ENCODE measurements at regions of chr20 and their contacts with region 1.

Region 1: DNA sequence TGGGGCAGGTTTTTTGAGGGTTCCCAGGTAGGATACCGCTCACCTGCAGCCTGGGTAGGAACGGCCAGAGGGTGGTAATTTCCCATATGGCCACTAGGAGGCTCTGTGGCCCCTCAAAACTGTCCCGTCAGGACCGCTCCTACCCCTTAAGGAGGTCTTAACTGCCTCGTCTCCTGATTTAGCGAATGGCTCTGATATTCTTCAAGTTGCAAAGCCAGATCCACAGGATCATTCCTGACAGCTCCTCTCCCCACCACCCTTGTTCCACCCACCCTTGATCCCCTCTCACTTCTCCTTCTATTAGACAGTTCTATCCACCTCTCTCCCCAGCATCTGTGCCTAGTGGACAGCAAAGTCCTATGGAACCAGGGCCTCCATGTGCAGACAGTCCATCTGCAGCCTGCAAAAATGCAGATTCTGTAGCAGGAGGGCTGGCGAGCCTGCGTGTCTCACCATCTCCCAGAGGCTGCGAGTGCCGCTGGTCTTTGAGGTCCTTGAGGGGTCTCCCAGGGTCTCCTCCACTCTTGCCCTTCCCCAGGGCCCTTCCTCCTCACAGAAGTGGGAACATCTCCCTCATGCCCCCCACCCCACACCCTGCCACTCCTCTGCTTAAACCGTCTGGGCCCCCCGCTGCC is 34.3 kb upstream of the ZBP1 start:
- DNase-seq: peak; percentile 71 to 87
- ATAC-seq: peak; percentile 69 to 82
- H3K4me3 ChIP-seq: no peak overlapping the region
- H3K27ac ChIP-seq: peak overlapping the region; percentile 24 to 57
- H3K4me1 ChIP-seq: peaks cover 37% of the 10 kb centered on the region
- CTCF ChIP-seq: peak; percentile 87
- EP300 ChIP-seq: no peak
- POLR2A ChIP-seq: no peak
- RAD21 ChIP-seq: peak; percentile 83 to 86

Region 2: GRCh38 chr20:57622579-57623377 is 31.7 kb before region 1 on chr20:
- CTCF ChIA-PET with region 1: interaction called, 22 read pairs
- POLR2A ChIA-PET with region 1: no interaction called
- DNase-seq: peak; percentile 88 to 91
- ATAC-seq: peak; percentile 90 to 98
- H3K4me3 ChIP-seq: no peak overlapping the region
- H3K27ac ChIP-seq: peak overlapping the region; percentile 67 to 82
- H3K4me1 ChIP-seq: peaks cover 25% of the 10 kb centered on the region
- CTCF ChIP-seq: peak; percentile 87
- EP300 ChIP-seq: no peak
- POLR2A ChIP-seq: no peak
- RAD21 ChIP-seq: peak; percentile 95 to 96

Region 3: GRCh38 chr20:57628047-57628961 is 26.2 kb before region 1 on chr20:
- CTCF ChIA-PET with region 1: interaction called, 22 read pairs
- POLR2A ChIA-PET with region 1: no interaction called
- DNase-seq: no peak
- ATAC-seq: no peak
- H3K4me3 ChIP-seq: no peak overlapping the region
- H3K27ac ChIP-seq: peak overlapping the region in 1 of 2 experiments; percentile 30; a peak in 1 of 6 replicates
- H3K4me1 ChIP-seq: peaks cover 3% of the 10 kb centered on the region; the same call in 1 of the 3 replicates
- CTCF ChIP-seq: no peak
- EP300 ChIP-seq: no peak
- POLR2A ChIP-seq: no peak
- RAD21 ChIP-seq: no peak

Region 4: GRCh38 chr20:57638173-57638894 is 16.1 kb before region 1 on chr20:
- CTCF ChIA-PET with region 1: interaction called, 25 read pairs
- POLR2A ChIA-PET with region 1: no interaction called
- DNase-seq: peak in 1 of 2 experiments; percentile 82
- ATAC-seq: peak; percentile 93 to 99
- H3K4me3 ChIP-seq: peak overlapping the region; percentile 14; the same call in 2 of the 3 replicates
- H3K27ac ChIP-seq: peak overlapping the region; percentile 66 to 82
- H3K4me1 ChIP-seq: peaks cover 18% of the 10 kb centered on the region
- CTCF ChIP-seq: no peak
- EP300 ChIP-seq: no peak
- POLR2A ChIP-seq: no peak
- RAD21 ChIP-seq: 0 out of 5 replicates have a peak, but pooled peaks of 1 of the 2 experiments have one; percentile 11

Region 5: DNA sequence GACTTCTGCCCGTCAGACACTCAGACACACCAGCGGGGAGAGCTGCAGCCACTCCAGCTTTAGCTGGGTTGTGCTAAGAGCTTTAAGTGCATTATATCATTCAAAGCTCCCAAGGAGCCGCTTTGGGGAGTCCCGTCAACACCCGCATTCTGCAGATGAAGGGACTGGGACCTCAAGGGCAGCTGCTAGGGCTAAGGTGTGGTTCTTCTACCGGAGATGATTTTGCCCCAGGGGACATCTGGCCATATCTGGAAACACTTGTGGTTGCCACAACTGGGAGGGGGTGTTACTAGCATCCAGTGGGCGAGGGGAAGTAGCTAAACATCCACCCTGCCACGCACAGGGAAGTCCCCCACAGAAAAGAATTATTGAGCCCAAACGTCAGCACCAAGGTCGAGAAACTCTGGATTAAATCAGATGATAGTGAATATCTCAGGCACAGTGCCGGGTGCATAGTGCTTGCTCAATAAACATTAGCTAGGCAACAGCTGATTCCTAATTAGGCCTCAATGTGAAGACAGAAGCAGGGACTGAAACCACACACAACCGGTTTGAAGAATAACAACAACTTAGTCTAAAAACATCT is 25.7 kb after region 1 on chr20:
- CTCF ChIA-PET with region 1: interaction called, 13 read pairs
- POLR2A ChIA-PET with region 1: no interaction called
- DNase-seq: no peak
- ATAC-seq: no peak
- H3K4me3 ChIP-seq: no peak overlapping the region
- H3K27ac ChIP-seq: peak overlapping the region in 1 of 2 experiments; percentile 41; a peak in 2 of 6 replicates
- H3K4me1 ChIP-seq: peaks cover 98% of the 10 kb centered on the region
- CTCF ChIP-seq: no peak
- EP300 ChIP-seq: no peak
- POLR2A ChIP-seq: no peak
- RAD21 ChIP-seq: no peak

Region 6: DNA sequence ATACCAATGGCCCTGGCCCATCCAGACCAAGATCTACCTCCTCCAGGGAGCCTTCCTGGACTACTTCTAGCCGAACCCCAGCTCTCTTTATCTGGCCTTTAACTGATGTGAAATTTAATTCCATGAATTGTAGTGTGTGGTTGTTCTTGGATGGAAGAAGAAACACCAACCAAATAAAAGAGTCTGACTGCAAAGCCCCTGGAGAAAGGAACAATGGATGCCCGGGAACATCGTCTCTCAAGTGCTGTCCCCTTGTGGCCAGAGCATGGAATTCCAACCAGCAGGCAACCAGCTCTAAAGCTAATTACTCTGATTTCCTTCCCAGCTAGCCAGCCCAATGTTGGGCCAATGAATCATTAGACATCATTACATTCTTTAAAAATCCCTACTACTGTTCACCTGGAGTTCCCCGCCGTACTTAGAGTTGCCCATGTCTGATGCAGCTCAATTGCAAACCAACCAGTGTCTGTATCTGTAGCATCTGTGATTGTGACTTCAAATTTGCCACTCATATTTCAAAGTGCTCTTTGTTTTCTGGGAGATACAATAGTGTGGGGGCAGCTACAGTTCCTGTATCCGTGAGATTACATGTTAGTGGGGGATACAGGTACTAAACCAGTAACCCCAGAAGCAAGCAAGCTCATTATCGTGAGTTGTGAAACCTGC is 432.8 kb after region 1 on chr20:
- CTCF ChIA-PET with region 1: interaction called, 15 read pairs
- POLR2A ChIA-PET with region 1: no interaction called
- DNase-seq: peak; percentile 56 to 57
- ATAC-seq: peak in 1 of 2 experiments; percentile 76; a peak in 3 of 6 replicates
- H3K4me3 ChIP-seq: no peak overlapping the region
- H3K27ac ChIP-seq: peak overlapping the region; percentile 42 to 70
- H3K4me1 ChIP-seq: peaks cover 4% of the 10 kb centered on the region
- CTCF ChIP-seq: peak; percentile 76
- EP300 ChIP-seq: no peak
- POLR2A ChIP-seq: no peak
- RAD21 ChIP-seq: peak; percentile 83 to 89

Region 7: DNA sequence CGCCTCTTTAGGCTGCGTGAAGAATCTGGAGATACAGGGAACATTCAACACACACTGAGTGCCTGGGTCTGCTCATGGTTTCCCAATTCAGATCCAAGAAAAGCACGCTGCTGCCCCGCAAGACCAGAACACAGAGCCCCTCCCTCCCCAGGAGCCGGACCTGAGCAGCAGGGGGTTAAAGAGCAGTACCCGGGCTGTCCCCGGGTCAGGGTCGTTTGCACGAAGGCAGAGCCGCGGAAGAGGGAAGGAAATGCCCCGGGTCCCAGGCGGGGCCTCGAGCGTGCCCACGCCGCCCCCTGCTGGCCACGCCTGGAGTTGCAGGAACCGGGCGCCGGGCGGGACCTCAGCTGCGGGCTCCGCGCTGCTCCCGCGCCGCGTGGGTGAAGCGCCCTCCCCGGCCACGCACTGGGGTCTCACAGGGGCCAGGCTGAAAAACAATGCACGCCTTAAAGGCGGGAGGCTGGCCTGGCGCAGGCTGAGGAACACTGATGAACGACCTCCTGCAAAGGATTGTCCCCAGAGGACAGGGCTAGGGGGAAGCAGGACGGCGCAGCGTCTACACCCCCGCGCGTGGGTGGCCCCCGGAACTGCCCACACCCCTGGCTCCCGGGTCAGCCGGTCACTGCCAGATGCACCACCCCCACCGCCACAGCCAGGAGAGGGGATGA is 525.1 kb after region 1 on chr20:
- CTCF ChIA-PET with region 1: interaction called, 18 read pairs
- POLR2A ChIA-PET with region 1: no interaction called
- DNase-seq: peak; percentile 48
- ATAC-seq: peak; percentile 89 to 95
- H3K4me3 ChIP-seq: peak overlapping the region; percentile 42
- H3K27ac ChIP-seq: peak overlapping the region; percentile 78 to 94
- H3K4me1 ChIP-seq: peaks cover 13% of the 10 kb centered on the region
- CTCF ChIP-seq: peak; percentile 97
- EP300 ChIP-seq: no peak
- POLR2A ChIP-seq: no peak
- RAD21 ChIP-seq: peak; percentile 91 to 99

Measured in A549 (cell line).